ENCODE measurements at regions of chr14 and their contacts with region 1.

Region 1: DNA sequence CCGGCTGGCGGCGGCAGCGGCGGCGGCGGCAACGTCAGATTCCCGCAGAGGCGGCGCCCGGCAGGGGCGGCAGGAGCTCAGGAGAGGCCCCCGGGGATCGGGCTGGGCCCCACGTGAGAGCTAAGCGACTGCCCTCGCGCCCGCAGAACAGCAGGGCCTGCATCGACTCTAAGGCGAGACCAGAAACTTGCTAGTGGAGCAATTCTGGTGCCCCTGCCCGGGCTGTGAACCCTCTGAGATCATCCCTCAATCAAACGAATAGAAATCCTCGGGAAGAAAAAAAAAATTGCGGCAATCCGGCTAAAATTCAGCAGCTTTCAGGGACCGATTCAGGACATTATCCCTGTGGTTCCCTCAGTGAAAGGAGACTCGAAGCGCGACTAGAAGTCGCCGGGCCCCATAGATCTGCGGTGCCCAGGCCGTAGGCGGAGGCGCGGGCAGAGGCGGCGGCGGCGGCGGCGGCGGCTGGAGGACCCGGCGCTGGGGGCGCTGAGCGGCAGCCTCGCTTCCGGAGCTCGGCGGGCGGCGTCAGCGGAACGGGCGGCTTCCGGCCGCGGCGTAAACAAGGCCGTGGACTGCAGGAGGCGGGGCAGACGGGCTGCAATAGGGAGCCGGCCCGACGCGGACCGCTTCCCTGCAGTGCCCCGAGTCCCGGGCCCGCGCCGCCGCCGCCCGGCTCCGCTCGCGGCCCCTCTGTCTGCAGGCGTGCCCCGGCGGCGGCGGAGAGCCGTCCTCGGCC is at the start of gene KLHDC2:
- DNase-seq: peak; percentile 72 to 88 (median 74)
- ATAC-seq: peak; percentile 89
- H3K4me3 ChIP-seq: peak within 1 kb of the TSS; percentile 93
- H3K27ac ChIP-seq: peak within 1 kb of the TSS; percentile 99
- H3K4me1 ChIP-seq: peaks cover 17 to 20% of the 10 kb centered on the region in 2 experiments; a peak in 4 of 5 replicates
- H3K27me3 ChIP-seq: no peaks in the 10 kb centered on the region
- CTCF ChIP-seq: peak in 2 of 3 experiments; percentile 24 to 59; a peak in 2 of 6 replicates
- EP300 ChIP-seq: no peak
- POLR2A ChIP-seq: peak; percentile 54; the same call in 1 of the 2 replicates
- RAD21 ChIP-seq: no peak
- polyA plus RNA-seq, gene KLHDC2: 6.3 to 7.8 TPM

Region 2: GRCh38 chr14:49692811-49693734 is 74.7 kb before region 1 on chr14 and contains the start of gene KLHDC1:
- CTCF ChIA-PET with region 1: no interaction called
- POLR2A ChIA-PET with region 1: interaction called, 20 read pairs
- in situ Hi-C with region 1: loop called (anchors 5 kb)
- intact Hi-C with region 1: loop called (anchors 2 kb)
- DNase-seq: peak; percentile 46 to 69 (median 50)
- ATAC-seq: peak; percentile 68
- H3K4me3 ChIP-seq: peak within 1 kb of the TSS; percentile 65
- H3K27ac ChIP-seq: peak within 1 kb of the TSS; percentile 91
- H3K4me1 ChIP-seq: peaks cover 11% of the 10 kb centered on the region in 2 experiments; a peak in 4 of 5 replicates
- H3K27me3 ChIP-seq: no peaks in the 10 kb centered on the region
- CTCF ChIP-seq: no peak
- EP300 ChIP-seq: no peak
- POLR2A ChIP-seq: peak; percentile 77
- RAD21 ChIP-seq: 0 out of 4 replicates have a peak, but pooled peaks of 1 of the 2 experiments have one; percentile 2
- polyA plus RNA-seq, gene KLHDC1: 0.08 to 0.20 TPM

Region 3: DNA sequence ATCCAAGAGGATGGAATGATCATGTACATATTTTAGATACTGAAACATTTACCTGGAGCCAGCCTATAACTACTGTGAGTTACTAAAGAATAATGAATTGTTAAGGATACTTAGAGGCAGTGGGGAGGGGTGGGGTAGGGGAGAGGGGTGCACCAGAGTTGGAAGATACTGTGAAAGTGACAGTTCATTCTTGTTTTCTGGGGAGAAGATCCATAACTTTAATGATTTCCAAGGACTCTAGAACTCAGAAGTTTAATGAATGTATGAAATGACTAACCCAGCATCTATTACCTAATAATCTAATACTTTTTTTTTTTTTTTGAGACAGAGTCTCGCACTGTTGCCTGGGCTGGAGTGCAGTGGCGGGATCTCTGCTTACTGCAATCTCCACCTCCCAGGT is 10.7 kb after region 1 on chr14:
- CTCF ChIA-PET with region 1: no interaction called
- POLR2A ChIA-PET with region 1: interaction called, 31 read pairs
- in situ Hi-C with region 1: no loop called
- intact Hi-C with region 1: no loop called
- DNase-seq: no peak
- ATAC-seq: no peak
- H3K4me3 ChIP-seq: no peak overlapping the region
- H3K27ac ChIP-seq: no peak overlapping the region
- H3K4me1 ChIP-seq: no peaks in the 10 kb centered on the region
- H3K27me3 ChIP-seq: no peaks in the 10 kb centered on the region
- CTCF ChIP-seq: no peak
- EP300 ChIP-seq: no peak
- POLR2A ChIP-seq: no peak
- RAD21 ChIP-seq: no peak

Measured in K562 (cell line).